CD4-positive, alpha-beta T cell (primary cell): ENCODE measurements at regions of chr17 and their contacts with region 1.

Region 1: GRCh38 chr17:65137021-65137991 is at the start of gene RGS9:
- DNase-seq: peak; percentile 68 to 93 (median 80)
- ATAC-seq: peak; percentile 97
- H3K4me3 ChIP-seq: peak within 1 kb of the TSS; percentile 51
- H3K4me3 Mint-ChIP-seq: peak within 1 kb of the TSS; percentile 78
- H3K27ac ChIP-seq: no peak within 1 kb of the TSS
- H3K27ac Mint-ChIP-seq: no peak within 1 kb of the TSS
- H3K4me1 ChIP-seq: peaks cover 30% of the 10 kb centered on the region
- H3K4me1 Mint-ChIP-seq: peaks cover 20% of the 10 kb centered on the region
- H3K27me3 ChIP-seq: peaks cover 2 to 7% of the 10 kb centered on the region in 2 experiments
- H3K27me3 Mint-ChIP-seq: peaks cover 18% of the 10 kb centered on the region
- CTCF ChIP-seq: peak; percentile 91
- total RNA-seq, gene RGS9: 0.60 to 0.73 TPM

Region 2: GRCh38 chr17:65122836-65123756 is 14.2 kb before region 1 on chr17:
- CTCF ChIA-PET with region 1: interaction called, 12 read pairs
- POLR2A ChIA-PET with region 1: interaction called, 3 read pairs
- intact Hi-C with region 1: no loop called
- DNase-seq: peak; percentile 72 to 93 (median 77)
- ATAC-seq: peak; percentile 95
- H3K4me3 ChIP-seq: peak overlapping the region; percentile 81
- H3K4me3 Mint-ChIP-seq: peak overlapping the region; percentile 88
- H3K27ac ChIP-seq: peak overlapping the region; percentile 52 to 87
- H3K27ac Mint-ChIP-seq: peak overlapping the region; percentile 87
- H3K4me1 ChIP-seq: peaks cover 15% of the 10 kb centered on the region
- H3K4me1 Mint-ChIP-seq: peaks cover 14% of the 10 kb centered on the region
- H3K27me3 ChIP-seq: no peaks in the 10 kb centered on the region
- H3K27me3 Mint-ChIP-seq: peaks cover 10% of the 10 kb centered on the region
- CTCF ChIP-seq: no peak